Cardiac septum (tissue), 1 donor: ENCODE measurements at regions of chr5 and their contacts with region 1.

Region 1: GRCh38 chr5:180868960-180869359 is 7.9 kb upstream of the ZFP62 start:
- DNase-seq: peak; percentile 91

Region 2: GRCh38 chr5:180970875-180971274 is 101.9 kb after region 1 on chr5:
- intact Hi-C with region 1: no loop called
- DNase-seq: no peak

Region 3: DNA sequence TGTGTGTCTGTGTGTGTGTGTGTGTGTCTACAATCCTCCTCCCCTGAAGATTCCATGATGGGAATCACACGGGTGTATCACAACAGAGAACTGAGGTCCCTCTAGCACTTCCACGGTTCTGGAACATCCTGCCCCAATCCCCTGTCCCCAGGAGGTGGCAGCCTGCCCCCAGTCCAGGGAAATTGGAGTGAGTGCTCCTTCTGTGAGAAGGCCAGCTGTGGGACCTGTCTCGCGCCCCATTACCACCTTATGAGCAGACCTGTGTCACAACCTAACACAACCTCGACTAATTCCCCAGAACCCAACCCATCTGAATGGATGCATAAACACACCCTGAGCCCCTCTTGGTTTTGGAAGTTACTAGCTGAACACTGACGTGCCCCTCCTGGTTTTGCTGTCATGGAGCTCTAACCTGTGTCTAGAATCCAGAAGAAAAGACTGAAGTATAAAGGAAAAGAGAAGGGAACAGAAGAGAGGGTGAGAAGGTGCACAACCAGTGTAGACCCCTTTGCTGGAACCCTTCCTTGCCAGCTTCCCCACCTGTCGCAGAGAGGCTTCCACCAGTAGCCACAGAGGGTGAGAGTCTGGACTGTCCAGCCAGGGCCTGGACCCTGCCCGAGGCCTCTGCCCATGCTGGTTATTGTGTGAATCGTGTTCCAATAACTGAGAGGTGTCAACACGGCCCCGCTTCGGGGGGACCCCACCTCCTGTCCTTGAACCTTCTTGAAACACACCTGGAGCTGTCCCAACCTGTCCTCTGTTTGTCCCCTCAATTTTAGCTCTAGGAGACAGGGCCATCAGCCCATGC is 174.5 kb after region 1 on chr5:
- intact Hi-C with region 1: loop called (anchors 5 kb)
- DNase-seq: no peak

Region 4: DNA sequence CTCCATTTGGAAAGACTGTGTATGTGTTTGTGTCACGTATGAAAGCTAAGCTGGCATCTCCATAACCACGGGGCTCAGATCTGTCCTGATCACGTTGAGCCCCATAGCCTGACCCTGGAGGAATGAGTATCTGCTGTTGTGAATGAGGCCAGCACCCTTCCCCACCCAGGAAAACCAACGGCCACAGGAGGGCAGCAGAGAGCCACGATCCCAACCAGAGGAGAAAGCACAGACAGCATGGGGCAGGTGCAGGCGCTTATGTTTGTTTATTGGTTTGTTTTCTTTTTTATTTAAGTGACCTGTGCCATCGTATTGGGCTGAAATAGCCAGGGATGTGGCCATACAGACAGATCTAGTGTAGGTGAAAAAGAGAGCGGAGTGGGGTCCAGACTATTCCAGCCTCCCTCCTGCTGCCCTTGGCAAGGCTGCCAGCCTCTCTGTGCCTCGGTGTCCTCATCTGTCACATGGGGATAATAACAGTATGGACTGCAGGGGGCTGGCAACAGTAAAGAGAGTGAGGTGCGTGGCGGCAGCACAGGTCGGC is 290.4 kb after region 1 on chr5:
- intact Hi-C with region 1: loop called (anchors 10 kb)
- DNase-seq: peak; percentile 92